ENCODE measurements at regions of chr7 and their contacts with region 1.

Region 1: GRCh38 chr7:151696721-151697514 is 177.2 kb upstream of the RHEB start:
- DNase-seq: peak; percentile 70
- ATAC-seq: peak; percentile 74
- H3K4me3 ChIP-seq: no peak overlapping the region
- H3K27ac ChIP-seq: no peak overlapping the region
- H3K4me1 ChIP-seq: peaks cover 28% of the 10 kb centered on the region
- H3K27me3 ChIP-seq: no peaks in the 10 kb centered on the region
- CTCF ChIP-seq: 0 out of 2 replicates have a peak, but pooled peaks have one; percentile 20

Region 2: DNA sequence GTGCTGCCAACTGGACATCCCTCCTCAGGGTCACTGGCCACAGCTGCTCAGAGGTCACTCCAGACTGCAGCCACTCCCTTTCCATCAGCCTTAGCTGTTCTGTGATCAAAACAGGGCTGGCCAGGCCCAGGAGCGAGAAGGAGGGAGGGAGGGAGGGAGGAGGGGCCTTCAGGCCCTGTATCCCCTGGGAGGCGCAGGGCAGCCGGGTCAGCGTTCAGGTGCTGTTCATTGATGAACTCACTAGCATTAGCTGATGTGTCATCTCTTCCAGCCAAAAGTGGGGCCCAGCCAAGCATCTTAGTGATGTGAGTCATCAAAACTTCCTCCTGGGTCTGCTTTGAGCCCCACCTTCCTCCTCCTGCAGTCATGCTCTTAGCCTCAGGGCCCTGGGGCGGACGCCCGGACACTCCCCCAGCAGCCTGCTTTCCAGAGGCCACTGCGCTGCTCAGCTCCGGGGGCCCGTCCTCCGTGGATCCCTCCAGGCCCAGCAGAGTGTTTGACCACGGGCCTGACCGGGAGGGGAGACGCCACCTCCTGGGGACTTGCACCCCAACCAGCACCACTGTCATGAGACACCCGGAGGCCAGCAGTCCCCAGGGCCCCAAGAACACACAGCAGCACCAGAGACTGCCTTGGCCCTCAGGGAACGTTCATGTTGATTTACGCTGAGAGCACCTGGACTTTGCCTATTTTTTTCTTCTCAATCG is 30.8 kb after region 1 on chr7:
- CTCF ChIA-PET with region 1: interaction called, 3 read pairs
- POLR2A ChIA-PET with region 1: interaction called, 3 read pairs
- intact Hi-C with region 1: loop called (anchors 1 kb)
- DNase-seq: peak; percentile 98
- ATAC-seq: peak; percentile 96
- H3K4me3 ChIP-seq: peak overlapping the region; percentile 54
- H3K27ac ChIP-seq: no peak overlapping the region
- H3K4me1 ChIP-seq: peaks cover 16% of the 10 kb centered on the region
- H3K27me3 ChIP-seq: no peaks in the 10 kb centered on the region
- CTCF ChIP-seq: no peak

Region 3: GRCh38 chr7:151744656-151745638 is 48.0 kb after region 1 on chr7:
- CTCF ChIA-PET with region 1: no interaction called
- POLR2A ChIA-PET with region 1: no interaction called
- intact Hi-C with region 1: loop called (anchors 5 kb)
- DNase-seq: peak; percentile 88
- ATAC-seq: peak; percentile 83
- H3K4me3 ChIP-seq: no peak overlapping the region
- H3K27ac ChIP-seq: peak overlapping the region; percentile 65
- H3K4me1 ChIP-seq: peaks cover 30% of the 10 kb centered on the region
- H3K27me3 ChIP-seq: no peaks in the 10 kb centered on the region
- CTCF ChIP-seq: peak; percentile 61